ENCODE measurements at regions of chr2 and their contacts with region 1.

Region 1: DNA sequence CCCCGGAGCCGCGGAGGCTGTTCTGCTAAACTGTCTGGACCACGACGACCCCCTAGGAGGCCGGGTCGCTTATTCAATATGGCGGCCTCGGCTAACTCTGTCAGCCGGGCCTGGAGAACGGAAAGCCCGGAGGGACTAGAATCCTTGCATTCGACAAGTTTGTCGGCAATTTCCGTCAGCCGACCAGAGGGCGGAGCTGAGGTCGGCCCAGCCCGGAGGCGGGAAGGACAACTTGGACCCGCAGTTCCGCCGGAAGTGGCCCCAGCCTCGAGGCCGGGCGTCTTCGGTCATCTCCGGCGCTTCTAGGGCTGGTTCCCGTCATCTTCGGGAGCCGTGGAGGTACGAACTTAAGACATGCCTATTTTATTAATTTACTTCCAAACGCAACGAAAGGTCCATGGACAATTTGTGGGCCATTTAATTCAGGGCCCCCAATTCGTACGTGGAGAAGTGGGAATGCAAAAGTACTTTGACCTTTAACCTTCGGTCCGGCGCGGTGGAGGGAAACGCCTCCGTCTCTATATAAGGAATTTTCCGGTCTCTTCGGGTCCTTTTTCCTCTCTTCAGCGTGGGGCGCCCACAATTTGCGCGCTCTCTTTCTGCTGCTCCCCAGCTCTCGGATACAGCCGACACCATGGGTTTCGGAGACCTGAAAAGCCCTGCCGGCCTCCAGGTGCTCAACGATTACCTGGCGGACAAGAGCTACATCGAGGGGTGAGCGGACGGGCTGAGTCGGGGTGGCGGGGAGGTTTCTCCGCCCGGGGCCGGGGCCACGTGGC is at the starts of genes EEF1B2 and NDUFS1:
- DNase-seq: peak; percentile 96
- ATAC-seq: peak; percentile 87
- H3K4me3 Mint-ChIP-seq: peak within 1 kb of the TSS; percentile 95
- H3K27ac Mint-ChIP-seq: peak within 1 kb of the TSS; percentile 94
- H3K4me1 Mint-ChIP-seq: peaks cover 38% of the 10 kb centered on the region
- H3K27me3 Mint-ChIP-seq: no peaks in the 10 kb centered on the region
- total RNA-seq, gene EEF1B2: 506 to 561 TPM
- total RNA-seq, gene NDUFS1: 56.6 to 66.1 TPM

Region 2: DNA sequence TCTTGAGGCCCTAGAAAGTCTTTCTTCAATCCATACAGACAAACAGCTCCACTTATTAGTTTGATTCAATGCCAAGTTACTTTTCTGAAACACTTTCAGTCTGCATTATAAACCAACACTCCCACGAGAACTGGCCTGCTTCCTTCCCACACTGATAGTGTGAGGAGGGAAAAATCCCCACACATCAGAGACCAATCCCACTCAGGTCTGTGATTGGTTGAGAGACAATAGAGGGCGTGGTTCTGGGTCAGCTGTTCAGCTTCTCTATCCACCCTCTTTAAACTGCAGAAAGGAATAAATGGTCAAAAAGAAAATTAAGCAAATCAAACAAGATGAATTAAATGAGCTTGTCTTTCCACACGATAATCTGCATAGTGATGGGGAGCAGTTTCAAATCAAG is 324.7 kb before region 1 on chr2:
- POLR2A ChIA-PET with region 1: no interaction called
- DNase-seq: no peak
- ATAC-seq: no peak
- H3K4me3 Mint-ChIP-seq: no peak overlapping the region
- H3K27ac Mint-ChIP-seq: no peak overlapping the region
- H3K4me1 Mint-ChIP-seq: no peaks in the 10 kb centered on the region
- H3K27me3 Mint-ChIP-seq: peaks cover 16% of the 10 kb centered on the region

Region 3: DNA sequence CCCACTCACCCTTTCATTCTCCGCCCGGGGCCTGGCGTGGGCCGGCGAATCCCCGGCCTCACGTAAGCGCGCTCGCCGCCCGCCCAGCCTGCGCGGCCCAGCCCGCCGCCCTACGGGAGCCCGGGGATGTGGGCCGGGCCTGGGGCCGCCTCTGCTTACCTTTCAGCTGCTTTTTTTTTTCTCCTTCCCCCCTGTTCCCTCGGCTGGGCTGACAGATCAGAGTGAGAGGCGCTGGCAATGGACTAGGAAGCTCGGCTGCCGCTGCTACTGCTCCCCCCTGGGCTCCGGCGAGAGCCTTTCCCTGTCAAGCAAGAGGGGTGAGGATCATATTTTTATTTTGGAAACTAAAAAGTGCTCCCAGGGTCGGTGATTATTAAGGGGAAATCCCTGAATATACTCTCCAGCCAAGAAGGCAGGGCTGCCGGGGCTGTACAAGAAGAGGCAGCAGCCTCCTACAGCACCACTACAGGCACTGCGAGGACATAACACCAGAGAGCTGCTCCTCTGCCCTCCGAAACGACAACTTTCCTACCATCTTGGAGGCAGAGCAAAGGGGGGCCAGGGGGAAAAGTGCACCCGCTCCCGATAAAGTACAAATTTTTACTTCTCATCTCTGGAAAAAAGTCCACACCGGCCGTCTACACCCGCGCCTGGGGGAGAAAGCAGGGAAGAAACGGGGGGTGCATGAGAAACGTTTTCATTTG is 73.6 kb before region 1 on chr2 and contains the start of gene INO80D:
- POLR2A ChIA-PET with region 1: interaction called, 13 read pairs
- DNase-seq: peak; percentile 83
- ATAC-seq: peak; percentile 92
- H3K4me3 Mint-ChIP-seq: peak within 1 kb of the TSS; percentile 99
- H3K27ac Mint-ChIP-seq: peak within 1 kb of the TSS; percentile 100
- H3K4me1 Mint-ChIP-seq: peaks cover 20% of the 10 kb centered on the region
- H3K27me3 Mint-ChIP-seq: no peaks in the 10 kb centered on the region
- total RNA-seq, gene INO80D: 25.5 to 28.5 TPM